ENCODE measurements at regions of chr14 and their contacts with region 1.

Region 1: GRCh38 chr14:49982501-49982951 is 89.6 kb downstream of the ARF6 start:
- DNase-seq: peak in 2 of 9 experiments; percentile 20 to 33
- ATAC-seq: peak; percentile 40
- H3K4me3 ChIP-seq: no peak overlapping the region
- H3K4me3 Mint-ChIP-seq: peak overlapping the region; percentile 42
- H3K27ac ChIP-seq: no peak overlapping the region
- H3K27ac Mint-ChIP-seq: peak overlapping the region; percentile 78
- H3K4me1 ChIP-seq: peaks cover 36% of the 10 kb centered on the region
- H3K4me1 Mint-ChIP-seq: peaks cover 50% of the 10 kb centered on the region
- H3K27me3 ChIP-seq: no peaks in the 10 kb centered on the region
- H3K27me3 Mint-ChIP-seq: no peaks in the 10 kb centered on the region
- CTCF ChIP-seq: no peak

Region 2: DNA sequence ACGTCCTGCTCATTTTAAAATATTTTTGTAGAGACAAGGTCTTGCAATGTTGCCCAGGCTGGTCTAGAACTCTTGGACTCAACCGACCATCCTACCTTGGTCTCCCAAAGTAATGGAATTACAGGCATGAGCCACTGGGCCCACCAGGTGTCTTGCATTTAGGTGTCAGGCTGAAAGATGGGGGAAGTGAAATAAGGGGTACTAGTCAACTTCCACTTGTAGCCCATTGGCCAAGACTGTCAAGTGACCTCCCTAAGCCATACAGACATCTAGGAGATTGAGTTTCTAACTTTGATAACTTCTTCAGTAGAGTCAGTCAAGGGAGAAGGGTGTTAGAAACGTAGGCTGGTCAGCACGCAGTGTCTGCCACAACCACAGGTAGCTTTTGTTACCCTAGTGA is 57.7 kb before region 1 on chr14:
- CTCF ChIA-PET with region 1: no interaction called
- POLR2A ChIA-PET with region 1: no interaction called
- intact Hi-C with region 1: no loop called
- DNase-seq: no peak
- ATAC-seq: no peak
- H3K4me3 ChIP-seq: no peak overlapping the region
- H3K4me3 Mint-ChIP-seq: no peak overlapping the region
- H3K27ac ChIP-seq: no peak overlapping the region
- H3K27ac Mint-ChIP-seq: no peak overlapping the region
- H3K4me1 ChIP-seq: no peaks in the 10 kb centered on the region
- H3K4me1 Mint-ChIP-seq: peaks cover 2% of the 10 kb centered on the region
- H3K27me3 ChIP-seq: no peaks in the 10 kb centered on the region
- H3K27me3 Mint-ChIP-seq: no peaks in the 10 kb centered on the region
- CTCF ChIP-seq: no peak

Region 3: DNA sequence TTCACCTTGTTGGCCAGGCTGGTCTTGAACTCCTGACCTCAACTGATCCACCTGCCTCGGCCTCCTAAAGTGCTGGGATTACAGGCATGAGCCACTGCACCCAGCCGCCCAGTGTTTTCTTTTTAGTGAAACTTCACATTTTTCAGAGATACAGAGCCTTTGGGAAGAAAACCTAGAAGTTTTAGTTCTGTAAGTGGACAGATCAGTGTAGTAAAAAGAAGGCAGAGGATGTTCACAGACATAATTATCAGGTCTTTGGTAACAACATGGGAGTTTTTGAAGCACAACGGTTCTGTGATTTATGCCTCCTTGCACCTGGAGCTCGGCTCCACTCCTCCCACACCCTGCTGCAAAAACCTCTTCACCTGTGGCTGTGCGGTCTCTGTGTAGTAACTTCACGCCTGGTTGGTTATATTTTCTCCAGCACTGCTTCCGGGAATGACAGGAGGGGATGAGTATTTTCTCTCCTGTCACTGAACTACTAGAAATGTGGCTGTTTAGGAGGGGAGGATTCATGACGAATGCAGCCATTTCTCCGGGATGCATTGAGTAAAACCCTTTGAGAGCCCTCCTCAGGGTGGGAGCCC is 22.6 kb before region 1 on chr14:
- CTCF ChIA-PET with region 1: no interaction called
- POLR2A ChIA-PET with region 1: no interaction called
- intact Hi-C with region 1: loop called in 1 of 2 experiments (anchors 2 kb)
- DNase-seq: peak in 2 of 9 experiments; percentile 27 to 37
- ATAC-seq: peak; percentile 62
- H3K4me3 ChIP-seq: no peak overlapping the region
- H3K4me3 Mint-ChIP-seq: peak overlapping the region; percentile 29
- H3K27ac ChIP-seq: no peak overlapping the region
- H3K27ac Mint-ChIP-seq: peak overlapping the region; percentile 11
- H3K4me1 ChIP-seq: no peaks in the 10 kb centered on the region
- H3K4me1 Mint-ChIP-seq: peaks cover 12% of the 10 kb centered on the region
- H3K27me3 ChIP-seq: no peaks in the 10 kb centered on the region
- H3K27me3 Mint-ChIP-seq: no peaks in the 10 kb centered on the region
- CTCF ChIP-seq: no peak

Region 4: GRCh38 chr14:49997991-49998390 is 15.5 kb after region 1 on chr14:
- CTCF ChIA-PET with region 1: interaction called, 3 read pairs
- POLR2A ChIA-PET with region 1: interaction called, 24 read pairs
- intact Hi-C with region 1: loop called in 1 of 2 experiments (anchors 2 kb)
- DNase-seq: no peak
- ATAC-seq: no peak
- H3K4me3 ChIP-seq: no peak overlapping the region
- H3K4me3 Mint-ChIP-seq: no peak overlapping the region
- H3K27ac ChIP-seq: peak overlapping the region in 1 of 2 experiments; percentile 96
- H3K27ac Mint-ChIP-seq: no peak overlapping the region
- H3K4me1 ChIP-seq: peaks cover 50% of the 10 kb centered on the region
- H3K4me1 Mint-ChIP-seq: peaks cover 56% of the 10 kb centered on the region
- H3K27me3 ChIP-seq: no peaks in the 10 kb centered on the region
- H3K27me3 Mint-ChIP-seq: no peaks in the 10 kb centered on the region
- CTCF ChIP-seq: no peak

Region 5: GRCh38 chr14:50099335-50099734 is 116.8 kb after region 1 on chr14:
- CTCF ChIA-PET with region 1: no interaction called
- POLR2A ChIA-PET with region 1: no interaction called
- intact Hi-C with region 1: no loop called
- DNase-seq: no peak
- ATAC-seq: no peak
- H3K4me3 ChIP-seq: no peak overlapping the region
- H3K4me3 Mint-ChIP-seq: no peak overlapping the region
- H3K27ac ChIP-seq: no peak overlapping the region
- H3K27ac Mint-ChIP-seq: peak overlapping the region; percentile 69
- H3K4me1 ChIP-seq: peaks cover 73% of the 10 kb centered on the region
- H3K4me1 Mint-ChIP-seq: peaks cover 71% of the 10 kb centered on the region
- H3K27me3 ChIP-seq: no peaks in the 10 kb centered on the region
- H3K27me3 Mint-ChIP-seq: no peaks in the 10 kb centered on the region
- CTCF ChIP-seq: no peak

Measured in CD8-positive, alpha-beta T cell (primary cell).